Common myeloid progenitor, CD34-positive (primary cell): ENCODE measurements at regions of chr1 and their contacts with region 1.

Region 1: DNA sequence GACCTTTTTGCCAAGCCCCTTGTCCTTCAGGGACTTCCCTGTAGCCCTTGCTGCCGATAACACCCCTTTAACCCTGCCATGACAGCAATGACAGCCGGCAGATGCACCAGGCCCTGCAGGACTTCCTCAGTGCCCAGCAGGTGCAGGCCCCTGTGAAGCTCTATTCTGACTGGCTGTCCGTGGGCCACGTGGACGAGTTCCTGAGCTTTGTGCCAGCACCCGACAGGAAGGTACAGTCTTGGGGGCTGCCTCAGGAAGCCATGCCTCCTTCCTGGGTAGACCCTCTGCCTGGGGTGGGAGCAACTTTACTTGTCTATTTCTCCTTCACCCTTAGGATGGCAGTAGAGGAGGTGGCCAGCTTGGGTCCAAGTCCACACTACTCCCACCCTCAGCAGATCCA is 16.1 kb upstream of the PADI6 start:
- DNase-seq: peak; percentile 32 to 82 (median 73)
- H3K4me3 ChIP-seq: peak overlapping the region in 5 of 7 experiments; percentile 16 to 48 (median 40)
- H3K27ac ChIP-seq: peak overlapping the region in 1 of 2 experiments; percentile 59
- H3K4me1 ChIP-seq: peaks cover 4 to 23% (median 18%) of the 10 kb centered on the region in 4 experiments
- H3K27me3 ChIP-seq: no peaks in the 10 kb centered on the region

Region 2: GRCh38 chr1:17201201-17202021 is 154.5 kb before region 1 on chr1:
- CTCF ChIA-PET with region 1: no interaction called
- POLR2A ChIA-PET with region 1: no interaction called
- DNase-seq: no peak
- H3K4me3 ChIP-seq: no peak overlapping the region
- H3K27ac ChIP-seq: no peak overlapping the region
- H3K4me1 ChIP-seq: peaks cover 0 to 14% (median 6%) of the 10 kb centered on the region in 4 experiments
- H3K27me3 ChIP-seq: no peaks in the 10 kb centered on the region

Region 3: DNA sequence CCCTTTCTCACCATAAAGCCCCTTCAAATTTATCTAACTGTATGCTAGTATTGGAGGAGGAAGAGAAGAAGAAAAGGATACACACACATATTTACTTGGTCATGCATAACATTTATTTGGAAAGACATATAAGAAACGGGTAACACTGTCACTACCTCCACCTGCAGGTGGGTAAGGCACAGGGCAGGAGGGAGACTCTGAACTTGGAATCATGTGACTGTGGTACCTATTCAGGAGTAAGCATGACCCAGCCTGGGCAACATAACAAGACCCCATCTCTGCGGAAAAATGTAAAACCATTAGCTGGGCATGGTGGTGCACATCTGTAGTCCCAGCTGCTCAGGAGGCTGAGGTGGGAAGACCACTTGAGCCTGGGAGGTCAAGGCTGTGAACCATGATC is 14.7 kb after region 1 on chr1:
- CTCF ChIA-PET with region 1: interaction called, 13 read pairs
- POLR2A ChIA-PET with region 1: interaction called, 3 read pairs
- DNase-seq: peak; percentile 45 to 73 (median 71)
- H3K4me3 ChIP-seq: no peak overlapping the region
- H3K27ac ChIP-seq: no peak overlapping the region
- H3K4me1 ChIP-seq: peaks cover 0 to 19% (median 9%) of the 10 kb centered on the region in 4 experiments
- H3K27me3 ChIP-seq: no peaks in the 10 kb centered on the region